ENCODE measurements at regions of chr2 and their contacts with region 1.

Region 1: DNA sequence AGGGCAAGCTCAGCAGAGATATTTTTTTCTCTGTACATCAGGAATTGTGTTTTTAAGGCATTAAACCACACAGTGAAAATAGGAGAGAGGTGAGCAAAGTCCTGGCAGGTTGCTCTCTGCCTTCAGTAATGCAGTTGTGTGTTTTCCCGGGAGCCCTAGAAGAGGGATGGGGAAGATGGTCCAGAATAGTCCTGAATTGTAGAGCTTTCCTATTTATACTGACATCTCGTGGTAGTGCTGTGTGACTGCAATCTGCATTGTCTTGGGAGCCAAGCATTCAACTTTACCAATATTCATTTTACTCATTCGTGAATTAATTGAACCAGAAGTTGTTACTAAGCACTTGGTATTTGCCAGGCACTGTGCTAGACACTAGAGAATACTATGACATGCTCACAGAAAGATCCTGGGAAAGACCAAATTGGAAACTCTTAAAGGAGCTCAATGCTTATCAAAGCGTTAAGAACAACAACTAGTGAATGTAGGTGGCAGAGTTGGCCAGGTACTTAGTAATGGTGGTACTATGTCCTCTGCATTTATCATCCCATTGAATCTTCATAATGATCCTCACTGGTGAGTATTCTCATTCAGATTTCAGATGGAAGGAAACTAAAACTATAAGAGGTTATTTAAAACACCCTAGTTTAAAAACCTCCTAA is 214.6 kb downstream of the TRIB2 start:
- DNase-seq: peak; percentile 23
- ATAC-seq: peak; percentile 51
- H3K4me3 Mint-ChIP-seq: no peak overlapping the region
- H3K27ac Mint-ChIP-seq: no peak overlapping the region
- H3K4me1 Mint-ChIP-seq: peaks cover 8% of the 10 kb centered on the region
- H3K27me3 Mint-ChIP-seq: peaks cover 28% of the 10 kb centered on the region

Region 2: GRCh38 chr2:12728221-12728777 is 203.0 kb before region 1 on chr2:
- CTCF ChIA-PET with region 1: interaction called, 31 read pairs
- POLR2A ChIA-PET with region 1: interaction called, 3 read pairs
- DNase-seq: peak; percentile 89
- ATAC-seq: peak; percentile 90
- H3K4me3 Mint-ChIP-seq: peak overlapping the region; percentile 67
- H3K27ac Mint-ChIP-seq: peak overlapping the region; percentile 86
- H3K4me1 Mint-ChIP-seq: peaks cover 85% of the 10 kb centered on the region
- H3K27me3 Mint-ChIP-seq: no peaks in the 10 kb centered on the region

Region 3: GRCh38 chr2:12858786-12859185 is 72.5 kb before region 1 on chr2:
- CTCF ChIA-PET with region 1: interaction called, 14 read pairs
- POLR2A ChIA-PET with region 1: interaction called, 3 read pairs
- DNase-seq: no peak
- ATAC-seq: no peak
- H3K4me3 Mint-ChIP-seq: no peak overlapping the region
- H3K27ac Mint-ChIP-seq: no peak overlapping the region
- H3K4me1 Mint-ChIP-seq: peaks cover 24% of the 10 kb centered on the region
- H3K27me3 Mint-ChIP-seq: peaks cover 3% of the 10 kb centered on the region

Region 4: GRCh38 chr2:12918835-12919445 is 12.4 kb before region 1 on chr2:
- CTCF ChIA-PET with region 1: interaction called, 17 read pairs
- POLR2A ChIA-PET with region 1: no interaction called
- DNase-seq: no peak
- ATAC-seq: no peak
- H3K4me3 Mint-ChIP-seq: no peak overlapping the region
- H3K27ac Mint-ChIP-seq: no peak overlapping the region
- H3K4me1 Mint-ChIP-seq: no peaks in the 10 kb centered on the region
- H3K27me3 Mint-ChIP-seq: peaks cover 20% of the 10 kb centered on the region

Region 5: DNA sequence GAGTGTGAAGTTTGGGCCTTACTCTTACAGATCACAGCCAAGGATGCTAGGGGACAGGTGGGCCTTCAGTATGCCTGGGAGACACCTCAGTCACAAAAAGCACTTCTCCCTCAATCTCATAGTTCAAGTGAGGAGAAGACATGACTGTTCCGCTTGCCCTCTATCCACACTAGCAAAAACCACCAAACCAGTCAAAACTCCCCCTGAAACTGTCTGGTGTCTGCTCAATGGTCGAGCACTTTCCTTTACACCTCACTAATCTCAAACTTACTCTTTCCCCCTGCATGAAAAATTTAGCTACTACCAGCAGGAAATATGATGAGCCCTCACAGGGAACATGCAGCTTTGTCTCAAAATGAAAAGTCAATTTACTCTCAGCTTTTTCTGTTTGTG is 17.6 kb after region 1 on chr2:
- CTCF ChIA-PET with region 1: interaction called, 23 read pairs
- POLR2A ChIA-PET with region 1: no interaction called
- DNase-seq: peak; percentile 25
- ATAC-seq: peak; percentile 58
- H3K4me3 Mint-ChIP-seq: no peak overlapping the region
- H3K27ac Mint-ChIP-seq: peak overlapping the region; percentile 2
- H3K4me1 Mint-ChIP-seq: peaks cover 26% of the 10 kb centered on the region
- H3K27me3 Mint-ChIP-seq: peaks cover 24% of the 10 kb centered on the region

Region 6: DNA sequence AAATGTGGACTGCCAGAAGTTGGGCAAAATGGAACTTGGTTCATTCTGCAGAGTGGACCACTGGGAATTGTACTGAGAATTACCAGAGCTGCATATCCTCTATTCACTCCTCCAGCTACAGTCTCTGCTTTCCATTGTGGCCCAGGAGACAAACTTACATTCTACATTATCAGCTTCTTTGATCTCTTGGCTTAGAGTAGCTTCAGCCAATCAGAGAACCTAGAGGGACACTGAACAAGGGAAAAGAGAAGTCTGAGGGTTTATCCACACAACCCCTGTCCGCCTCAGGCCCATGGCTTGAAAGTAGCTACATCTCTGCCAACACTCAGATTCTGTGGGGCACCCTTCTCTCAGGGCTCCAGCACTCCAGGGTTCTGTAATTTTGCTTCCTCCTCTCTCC is 36.5 kb after region 1 on chr2:
- CTCF ChIA-PET with region 1: interaction called, 10 read pairs
- POLR2A ChIA-PET with region 1: no interaction called
- DNase-seq: no peak
- ATAC-seq: no peak
- H3K4me3 Mint-ChIP-seq: no peak overlapping the region
- H3K27ac Mint-ChIP-seq: no peak overlapping the region
- H3K4me1 Mint-ChIP-seq: peaks cover 44% of the 10 kb centered on the region
- H3K27me3 Mint-ChIP-seq: peaks cover 8% of the 10 kb centered on the region

Region 7: DNA sequence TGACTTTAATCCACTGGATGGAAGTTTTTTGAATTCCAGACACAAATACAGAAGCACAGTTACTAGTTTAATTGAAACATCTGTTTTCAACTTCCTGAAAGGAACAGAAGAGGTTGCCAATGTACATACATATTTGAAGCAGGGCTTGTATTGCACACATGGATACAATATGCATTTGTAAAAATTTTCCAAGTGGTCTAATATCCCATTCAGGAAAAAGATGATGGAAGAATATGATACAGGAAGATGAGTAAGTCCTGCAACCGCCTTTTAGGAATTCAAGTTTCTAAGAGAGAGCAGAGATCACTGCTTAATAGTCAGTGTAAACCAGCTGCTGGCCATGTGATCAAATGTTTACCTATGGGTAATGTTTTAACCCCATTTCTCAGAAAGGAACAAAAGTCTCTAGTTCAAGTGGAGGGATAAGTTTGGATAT is 50.9 kb after region 1 on chr2:
- CTCF ChIA-PET with region 1: no interaction called
- POLR2A ChIA-PET with region 1: no interaction called
- DNase-seq: no peak
- ATAC-seq: no peak
- H3K4me3 Mint-ChIP-seq: no peak overlapping the region
- H3K27ac Mint-ChIP-seq: no peak overlapping the region
- H3K4me1 Mint-ChIP-seq: peaks cover 2% of the 10 kb centered on the region
- H3K27me3 Mint-ChIP-seq: peaks cover 20% of the 10 kb centered on the region

Region 8: DNA sequence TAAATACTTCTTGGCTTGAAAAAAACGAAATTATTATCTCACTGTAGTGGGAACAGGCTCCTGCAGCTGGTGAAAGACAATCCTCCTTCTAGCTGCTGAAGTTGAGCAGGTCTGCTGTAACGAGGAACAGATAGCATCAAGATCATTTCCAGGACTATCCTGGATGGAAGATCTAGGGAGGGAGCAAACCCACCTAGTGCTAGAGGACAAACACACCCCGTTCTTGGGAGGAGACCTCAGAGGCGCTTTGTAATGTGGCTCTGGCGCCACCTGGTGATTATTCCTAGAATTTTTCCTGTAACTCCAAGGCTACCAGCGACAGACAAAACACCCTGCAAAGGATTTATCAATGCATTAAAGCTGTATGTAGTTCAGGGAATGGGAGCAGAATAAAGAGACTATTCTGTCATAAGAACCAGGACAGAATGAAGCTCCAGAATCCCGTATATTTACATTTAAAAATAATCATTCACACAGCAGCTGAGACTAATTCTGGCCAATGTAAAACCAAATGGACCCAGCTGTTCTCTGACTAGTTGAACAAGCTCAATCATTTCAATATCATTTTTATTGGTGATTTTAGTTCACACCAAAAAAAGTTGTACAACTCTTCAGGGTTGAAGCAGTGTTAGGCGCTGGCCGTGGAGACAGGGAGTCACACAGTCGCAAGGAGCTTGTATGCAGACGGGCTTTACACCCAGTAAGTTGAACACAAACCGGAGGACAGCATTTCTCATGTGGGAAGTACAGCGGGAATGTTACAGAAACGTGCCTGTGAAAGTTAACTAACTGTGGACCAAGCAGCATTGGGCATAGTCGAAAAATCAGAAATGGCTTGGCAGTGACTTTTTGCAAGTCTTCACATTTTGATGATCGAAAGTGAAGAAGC is 75.8 kb after region 1 on chr2:
- CTCF ChIA-PET with region 1: interaction called, 30 read pairs
- POLR2A ChIA-PET with region 1: no interaction called
- DNase-seq: peak; percentile 78
- ATAC-seq: peak; percentile 85
- H3K4me3 Mint-ChIP-seq: no peak overlapping the region
- H3K27ac Mint-ChIP-seq: no peak overlapping the region
- H3K4me1 Mint-ChIP-seq: peaks cover 6% of the 10 kb centered on the region
- H3K27me3 Mint-ChIP-seq: peaks cover 36% of the 10 kb centered on the region

Region 9: DNA sequence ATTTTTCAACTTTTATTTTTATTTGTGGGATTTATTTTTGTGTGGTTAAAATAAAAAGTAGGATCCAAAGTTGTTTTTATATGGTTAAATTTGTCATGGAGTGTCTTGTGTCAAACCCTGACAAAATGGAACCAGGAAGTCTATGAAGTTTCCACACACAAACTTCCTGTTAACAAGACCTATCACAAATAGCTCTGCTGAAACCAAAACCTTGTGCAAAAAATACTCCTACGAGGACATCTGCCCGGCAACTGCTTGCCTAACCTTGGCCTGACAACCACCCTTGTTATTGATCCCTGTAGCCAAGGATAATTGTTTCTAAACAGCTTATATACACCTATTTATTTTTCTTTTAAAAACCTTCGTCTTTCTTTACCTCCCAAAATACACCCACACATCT is 175.0 kb after region 1 on chr2:
- CTCF ChIA-PET with region 1: no interaction called
- POLR2A ChIA-PET with region 1: no interaction called
- DNase-seq: no peak
- ATAC-seq: no peak
- H3K4me3 Mint-ChIP-seq: no peak overlapping the region
- H3K27ac Mint-ChIP-seq: no peak overlapping the region
- H3K4me1 Mint-ChIP-seq: no peaks in the 10 kb centered on the region
- H3K27me3 Mint-ChIP-seq: peaks cover 2% of the 10 kb centered on the region